ENCODE measurements at regions of chr1 and their contacts with region 1.

Region 1: DNA sequence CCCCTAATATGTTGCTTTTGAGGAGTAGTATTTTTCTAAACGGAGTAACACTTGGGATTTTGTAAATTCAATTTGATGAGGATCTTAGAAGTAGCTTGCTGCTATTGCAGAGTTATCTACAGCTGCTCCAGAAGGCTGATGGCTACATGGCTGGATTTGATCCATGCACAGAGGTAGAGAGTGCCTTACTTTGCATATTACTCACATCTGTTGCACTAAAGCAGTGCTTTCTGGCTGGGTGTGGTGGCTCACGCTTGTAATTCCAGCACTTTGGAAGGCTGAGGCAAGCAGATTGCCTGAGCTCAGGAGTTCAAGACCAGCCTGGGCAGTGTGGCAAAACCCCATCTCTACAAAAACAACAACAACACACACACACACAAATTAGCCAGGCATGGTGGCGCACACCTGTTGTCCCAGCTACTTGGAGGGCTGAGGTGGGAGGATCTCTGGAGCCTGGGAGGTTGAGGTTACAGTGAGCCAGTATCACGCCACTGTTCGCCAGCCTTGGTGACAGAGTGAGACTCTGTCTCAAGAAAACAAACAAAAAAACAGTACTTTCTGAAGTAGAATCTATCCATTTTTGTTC is 24.6 kb downstream of the RALGPS2 start:
- DNase-seq: no peak
- H3K4me3 ChIP-seq: no peak overlapping the region
- H3K27ac ChIP-seq: no peak overlapping the region
- H3K4me1 ChIP-seq: no peaks in the 10 kb centered on the region
- H3K27me3 ChIP-seq: no peaks in the 10 kb centered on the region
- CTCF ChIP-seq: no peak
- EP300 ChIP-seq: no peak
- POLR2A ChIP-seq: no peak

Region 2: DNA sequence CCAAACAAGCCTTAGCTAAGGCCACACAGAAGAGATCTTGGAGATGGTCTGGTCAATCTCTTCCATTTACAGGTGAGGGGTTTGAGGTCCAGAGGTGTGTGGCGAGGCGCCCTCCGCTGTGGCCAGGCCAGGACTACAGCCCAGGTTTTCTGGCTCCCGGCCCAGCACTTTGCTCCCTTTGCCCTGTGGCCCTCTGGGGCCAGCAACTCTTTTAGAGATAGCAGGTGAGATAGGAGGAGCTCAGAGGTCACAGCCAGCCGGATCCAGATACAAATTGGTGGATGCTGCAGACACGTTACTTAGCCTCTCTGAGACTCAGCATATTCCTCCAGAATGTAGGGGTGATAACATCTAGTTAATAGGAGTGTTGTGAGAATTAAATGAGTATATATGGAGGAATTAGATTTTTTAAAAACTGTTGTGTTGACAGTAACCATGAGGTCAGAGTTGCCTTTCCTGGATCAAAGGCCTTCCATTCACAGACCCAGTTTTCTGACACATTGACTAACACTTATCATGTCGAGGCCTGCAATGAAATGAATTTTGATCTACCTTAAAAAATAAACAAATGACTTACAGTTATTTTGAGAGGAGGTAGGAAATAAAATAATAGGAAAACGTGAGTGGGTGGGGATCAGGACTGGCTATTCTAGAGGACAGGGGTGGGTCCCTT is 220.2 kb before region 1 on chr1:
- intact Hi-C with region 1: loop called in 1 of 4 experiments (anchors 2 kb)
- DNase-seq: no peak
- H3K4me3 ChIP-seq: no peak overlapping the region
- H3K27ac ChIP-seq: no peak overlapping the region
- H3K4me1 ChIP-seq: no peaks in the 10 kb centered on the region
- H3K27me3 ChIP-seq: no peaks in the 10 kb centered on the region
- CTCF ChIP-seq: no peak
- EP300 ChIP-seq: no peak
- POLR2A ChIP-seq: no peak

Region 3: GRCh38 chr1:178542560-178543356 is 206.9 kb before region 1 on chr1:
- intact Hi-C with region 1: loop called in 3 of 4 experiments (anchors 1 to 5 kb)
- DNase-seq: peak; percentile 81 to 95 (median 91)
- H3K4me3 ChIP-seq: peak overlapping the region; percentile 81
- H3K27ac ChIP-seq: peak overlapping the region in 1 of 2 donors; percentile 63
- H3K4me1 ChIP-seq: no peaks in the 10 kb centered on the region
- H3K27me3 ChIP-seq: no peaks in the 10 kb centered on the region
- CTCF ChIP-seq: peak; percentile 93 to 99 (median 93)
- EP300 ChIP-seq: no peak
- POLR2A ChIP-seq: no peak

Measured in ovary (tissue), 10 donors.